Right cardiac atrium (tissue), 5 donors: ENCODE measurements at regions of chr2 and their contacts with region 1.

Region 1: DNA sequence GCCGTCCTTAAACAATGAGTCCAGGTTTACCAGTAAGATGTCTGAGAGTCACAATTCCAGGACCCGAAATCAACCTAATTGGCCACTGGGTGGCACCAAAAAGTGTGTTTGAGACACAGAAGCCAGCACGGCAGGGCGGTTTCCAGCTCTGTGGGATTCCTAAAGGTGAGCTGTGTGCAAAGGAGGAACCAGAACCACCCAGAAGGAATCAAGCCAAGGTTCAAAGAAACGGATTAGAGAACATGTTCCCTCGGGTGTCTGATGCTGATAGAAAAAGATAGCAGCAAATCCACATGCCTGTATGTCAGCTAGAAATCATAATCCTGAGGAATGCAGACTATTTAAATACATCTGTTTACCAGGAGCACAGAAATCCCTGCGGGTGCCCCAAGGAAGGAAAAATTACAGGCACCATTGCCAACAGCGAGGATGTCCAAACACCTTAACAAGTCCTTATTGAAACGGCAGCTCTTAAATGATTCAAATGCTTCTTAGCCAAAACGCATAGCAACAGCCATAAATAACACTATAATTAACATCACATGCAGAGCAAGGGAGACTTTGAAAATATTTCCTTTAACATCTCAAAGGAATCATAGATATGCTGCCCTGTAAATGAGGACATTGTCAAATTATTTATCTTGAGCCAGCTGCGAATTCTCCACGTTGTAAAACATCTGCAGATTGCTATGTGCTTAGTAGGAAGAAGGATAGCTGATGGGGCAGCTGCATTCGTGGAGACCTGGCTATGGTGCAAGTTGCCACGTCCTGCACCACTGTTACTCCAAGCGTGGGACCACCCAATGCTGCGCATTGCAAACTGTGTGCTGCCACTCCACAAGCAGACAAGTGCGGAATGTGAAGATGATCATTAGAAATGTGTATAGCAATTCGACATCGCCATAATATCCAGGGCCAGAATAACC is 318.7 kb upstream of the NCKAP5 start:
- DNase-seq: peak; percentile 66 to 90 (median 78)
- ATAC-seq: peak; percentile 71 to 72
- H3K4me3 ChIP-seq: no peak overlapping the region
- H3K27ac ChIP-seq: no peak overlapping the region
- H3K4me1 ChIP-seq: no peaks in the 10 kb centered on the region
- H3K27me3 ChIP-seq: no peaks in the 10 kb centered on the region

Region 2: DNA sequence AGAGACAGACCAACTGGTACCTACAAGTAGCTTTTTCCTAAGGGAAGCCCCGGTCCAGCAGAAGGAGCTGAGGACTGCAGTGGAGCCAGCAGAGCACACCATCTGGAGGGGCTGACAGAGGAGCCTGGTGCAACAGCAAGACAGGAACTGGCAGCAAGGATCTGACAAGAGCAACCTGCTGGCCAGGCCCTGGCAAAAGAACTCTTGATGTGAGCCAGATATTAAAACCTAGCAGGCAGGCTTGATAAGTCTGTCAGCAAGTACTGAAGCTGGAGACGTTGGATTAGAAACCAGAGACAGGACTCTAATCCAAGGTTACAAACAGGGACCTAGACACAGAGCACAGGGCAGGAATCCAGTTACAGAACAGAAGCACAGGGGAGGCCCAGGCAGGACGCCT is 106.2 kb after region 1 on chr2:
- intact Hi-C with region 1: loop called in 1 of 4 experiments (anchors 10 kb)
- DNase-seq: peak in 1 of 3 donors; percentile 67
- ATAC-seq: peak; percentile 51 to 82
- H3K4me3 ChIP-seq: no peak overlapping the region
- H3K27ac ChIP-seq: peak overlapping the region; percentile 34
- H3K4me1 ChIP-seq: peaks cover 2% of the 10 kb centered on the region
- H3K27me3 ChIP-seq: no peaks in the 10 kb centered on the region

Region 3: GRCh38 chr2:134109725-134110124 is 222.7 kb after region 1 on chr2:
- intact Hi-C with region 1: loop called in 2 of 4 experiments (anchors 5 to 10 kb)
- DNase-seq: no peak
- ATAC-seq: no peak
- H3K4me3 ChIP-seq: no peak overlapping the region
- H3K27ac ChIP-seq: no peak overlapping the region
- H3K4me1 ChIP-seq: no peaks in the 10 kb centered on the region
- H3K27me3 ChIP-seq: no peaks in the 10 kb centered on the region

Region 4: GRCh38 chr2:134420259-134420658 is 533.3 kb after region 1 on chr2:
- intact Hi-C with region 1: loop called in 1 of 4 experiments (anchors 10 kb)
- DNase-seq: no peak
- ATAC-seq: peak; percentile 30 to 39
- H3K4me3 ChIP-seq: no peak overlapping the region
- H3K27ac ChIP-seq: peak overlapping the region; percentile 11
- H3K4me1 ChIP-seq: no peaks in the 10 kb centered on the region
- H3K27me3 ChIP-seq: no peaks in the 10 kb centered on the region

Region 5: GRCh38 chr2:134460583-134460998 is 573.6 kb after region 1 on chr2:
- intact Hi-C with region 1: loop called in 1 of 4 experiments (anchors 10 kb)
- DNase-seq: peak; percentile 49 to 81 (median 73)
- ATAC-seq: peak; percentile 65 to 69
- H3K4me3 ChIP-seq: no peak overlapping the region
- H3K27ac ChIP-seq: no peak overlapping the region
- H3K4me1 ChIP-seq: no peaks in the 10 kb centered on the region
- H3K27me3 ChIP-seq: no peaks in the 10 kb centered on the region